ENCODE measurements at regions of chr14 and their contacts with region 1.

Region 1: GRCh38 chr14:70073924-70074566 is 114.7 kb downstream of the SLC8A3 start:
- DNase-seq: peak; percentile 69
- H3K4me3 ChIP-seq: no peak overlapping the region; a peak in 1 of 4 replicates
- H3K27ac ChIP-seq: no peak overlapping the region; a peak in 1 of 4 replicates
- H3K4me1 ChIP-seq: peaks cover 0 to 31% of the 10 kb centered on the region in 2 experiments; a peak in 2 of 4 replicates
- H3K27me3 ChIP-seq: no peaks in the 10 kb centered on the region
- CTCF ChIP-seq: peak; percentile 73
- EP300 ChIP-seq: no peak
- RAD21 ChIP-seq: peak; percentile 82

Region 2: GRCh38 chr14:69667938-69668335 is 406.1 kb before region 1 on chr14:
- CTCF ChIA-PET with region 1: no interaction called
- POLR2A ChIA-PET with region 1: no interaction called
- DNase-seq: no peak
- H3K4me3 ChIP-seq: no peak overlapping the region
- H3K27ac ChIP-seq: no peak overlapping the region
- H3K4me1 ChIP-seq: peaks cover 12 to 18% of the 10 kb centered on the region in 2 experiments
- H3K27me3 ChIP-seq: no peaks in the 10 kb centered on the region
- CTCF ChIP-seq: no peak
- EP300 ChIP-seq: no peak
- RAD21 ChIP-seq: no peak

Region 3: GRCh38 chr14:69842686-69843420 is 231.2 kb before region 1 on chr14:
- CTCF ChIA-PET with region 1: no interaction called
- POLR2A ChIA-PET with region 1: no interaction called
- DNase-seq: no peak
- H3K4me3 ChIP-seq: no peak overlapping the region
- H3K27ac ChIP-seq: no peak overlapping the region
- H3K4me1 ChIP-seq: peaks cover 0 to 11% of the 10 kb centered on the region in 2 experiments; a peak in 1 of 4 replicates
- H3K27me3 ChIP-seq: no peaks in the 10 kb centered on the region
- CTCF ChIP-seq: no peak
- EP300 ChIP-seq: no peak
- RAD21 ChIP-seq: no peak

Region 4: DNA sequence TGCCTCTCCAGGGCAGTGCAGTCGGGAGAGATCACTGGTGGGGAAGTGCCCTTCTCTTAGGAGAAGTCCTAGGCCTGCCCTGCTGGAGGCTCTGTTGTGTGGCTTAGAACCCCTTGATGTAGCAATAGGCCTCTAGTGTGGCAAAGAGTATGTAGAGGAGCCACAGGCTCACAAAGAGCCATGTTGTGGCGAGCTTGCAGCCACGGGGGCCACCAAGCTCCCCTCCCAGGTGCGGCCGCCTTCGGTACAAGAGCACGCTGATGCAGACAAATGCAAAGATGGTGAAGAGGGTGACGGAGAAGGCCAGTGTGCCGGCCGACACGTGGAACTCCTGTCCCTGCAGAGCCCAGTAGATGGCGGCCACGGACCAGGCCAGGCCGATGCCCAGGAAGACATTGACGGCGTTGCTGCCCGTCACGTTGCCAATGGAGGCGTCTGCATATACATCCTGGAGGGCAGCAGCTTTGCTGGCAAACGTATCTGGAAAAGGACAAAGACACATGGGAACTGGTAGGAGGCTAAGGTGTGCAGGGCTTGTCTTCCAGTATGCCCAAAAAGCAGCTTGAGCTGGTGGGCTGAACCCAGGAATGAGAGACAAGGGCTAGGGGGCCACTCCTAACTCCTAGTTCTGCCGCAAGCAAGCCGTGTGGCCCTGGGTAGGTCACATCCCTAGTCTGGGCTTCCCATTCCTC is 28.1 kb before region 1 on chr14:
- CTCF ChIA-PET with region 1: interaction called, 132 read pairs
- POLR2A ChIA-PET with region 1: no interaction called
- DNase-seq: peak; percentile 82
- H3K4me3 ChIP-seq: peak overlapping the region in 1 of 2 experiments; percentile 39; a peak in 1 of 4 replicates
- H3K27ac ChIP-seq: peak overlapping the region in 1 of 2 experiments; percentile 40; a peak in 2 of 4 replicates
- H3K4me1 ChIP-seq: peaks cover 0 to 18% of the 10 kb centered on the region in 2 experiments; a peak in 1 of 4 replicates
- H3K27me3 ChIP-seq: no peaks in the 10 kb centered on the region
- CTCF ChIP-seq: peak; percentile 47
- EP300 ChIP-seq: no peak
- RAD21 ChIP-seq: peak; percentile 96

Region 5: DNA sequence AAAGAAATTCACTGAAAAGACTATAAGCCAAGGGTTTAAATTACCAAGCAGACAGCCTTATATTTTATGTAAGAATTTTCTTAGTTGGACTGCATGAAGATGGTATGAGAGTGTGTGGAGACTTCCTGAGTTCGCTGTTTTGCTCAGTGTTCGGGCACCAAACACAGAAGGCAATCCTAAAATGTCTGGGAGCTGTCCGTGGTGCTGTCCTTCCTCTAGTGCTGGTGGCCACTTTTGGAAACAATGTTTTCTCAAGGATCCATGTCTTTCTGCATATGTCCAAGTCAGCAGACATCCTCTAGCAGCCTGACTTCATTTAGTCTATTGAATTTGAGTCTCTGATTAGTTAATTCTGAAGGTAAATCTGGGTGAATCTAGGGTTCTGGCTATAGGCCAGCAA is 21.1 kb before region 1 on chr14:
- CTCF ChIA-PET with region 1: interaction called, 132 read pairs
- POLR2A ChIA-PET with region 1: no interaction called
- DNase-seq: no peak
- H3K4me3 ChIP-seq: no peak overlapping the region
- H3K27ac ChIP-seq: no peak overlapping the region
- H3K4me1 ChIP-seq: peaks cover 0 to 17% of the 10 kb centered on the region in 2 experiments; a peak in 2 of 4 replicates
- H3K27me3 ChIP-seq: no peaks in the 10 kb centered on the region
- CTCF ChIP-seq: no peak
- EP300 ChIP-seq: no peak
- RAD21 ChIP-seq: no peak

Region 6: GRCh38 chr14:70086685-70087379 is 12.8 kb after region 1 on chr14:
- CTCF ChIA-PET with region 1: interaction called, 62 read pairs
- POLR2A ChIA-PET with region 1: no interaction called
- DNase-seq: peak; percentile 22
- H3K4me3 ChIP-seq: no peak overlapping the region
- H3K27ac ChIP-seq: peak overlapping the region in 1 of 2 experiments; percentile 81; a peak in 2 of 4 replicates
- H3K4me1 ChIP-seq: peaks cover 0 to 16% of the 10 kb centered on the region in 2 experiments; a peak in 2 of 4 replicates
- H3K27me3 ChIP-seq: no peaks in the 10 kb centered on the region
- CTCF ChIP-seq: peak; percentile 60
- EP300 ChIP-seq: peak in 1 of 2 experiments; percentile 53; a peak in 1 of 4 replicates
- RAD21 ChIP-seq: peak; percentile 78

Region 7: DNA sequence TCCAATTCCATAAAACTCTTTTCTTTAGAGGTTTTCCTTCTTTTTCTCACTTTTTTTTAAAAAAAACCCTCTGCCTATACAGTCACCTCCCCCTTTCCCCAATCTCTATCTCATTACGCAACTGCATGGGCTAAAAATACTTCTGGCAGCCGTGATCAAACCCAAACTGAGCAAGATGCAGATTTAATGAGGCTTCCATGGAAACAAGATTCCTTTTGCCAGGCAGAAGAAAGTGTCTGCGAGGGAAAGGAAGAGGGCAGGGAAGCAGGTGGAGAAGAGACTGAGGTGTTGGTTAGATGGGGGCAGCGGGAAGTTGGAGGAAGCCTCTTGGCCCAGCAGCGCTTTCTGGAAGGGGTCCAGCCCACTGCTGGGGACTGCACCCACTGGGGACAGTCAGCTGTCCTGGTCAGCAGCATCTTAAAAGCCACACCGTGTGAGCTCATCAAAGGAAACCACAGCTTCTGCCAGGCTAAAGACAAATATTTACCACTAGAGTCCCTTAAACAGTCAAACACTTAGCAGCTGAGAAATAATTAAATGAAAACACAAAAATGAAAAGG is 24.3 kb after region 1 on chr14:
- CTCF ChIA-PET with region 1: interaction called, 32 read pairs
- POLR2A ChIA-PET with region 1: no interaction called
- DNase-seq: no peak
- H3K4me3 ChIP-seq: no peak overlapping the region
- H3K27ac ChIP-seq: peak overlapping the region in 1 of 2 experiments; percentile 99; a peak in 2 of 4 replicates
- H3K4me1 ChIP-seq: peaks cover 0 to 56% of the 10 kb centered on the region in 2 experiments; a peak in 2 of 4 replicates
- H3K27me3 ChIP-seq: no peaks in the 10 kb centered on the region
- CTCF ChIP-seq: no peak
- EP300 ChIP-seq: no peak
- RAD21 ChIP-seq: no peak

Region 8: GRCh38 chr14:70114621-70115156 is 40.6 kb after region 1 on chr14:
- CTCF ChIA-PET with region 1: no interaction called
- POLR2A ChIA-PET with region 1: no interaction called
- DNase-seq: no peak
- H3K4me3 ChIP-seq: no peak overlapping the region
- H3K27ac ChIP-seq: no peak overlapping the region; a peak in 1 of 4 replicates
- H3K4me1 ChIP-seq: peaks cover 0 to 15% of the 10 kb centered on the region in 2 experiments; a peak in 1 of 4 replicates
- H3K27me3 ChIP-seq: no peaks in the 10 kb centered on the region
- CTCF ChIP-seq: no peak
- EP300 ChIP-seq: no peak
- RAD21 ChIP-seq: no peak

Region 9: GRCh38 chr14:70317969-70318634 is 244.1 kb after region 1 on chr14:
- CTCF ChIA-PET with region 1: interaction called, 15 read pairs
- POLR2A ChIA-PET with region 1: no interaction called
- DNase-seq: peak; percentile 63
- H3K4me3 ChIP-seq: no peak overlapping the region; a peak in 1 of 4 replicates
- H3K27ac ChIP-seq: no peak overlapping the region
- H3K4me1 ChIP-seq: no peaks in the 10 kb centered on the region; a peak in 1 of 4 replicates
- H3K27me3 ChIP-seq: no peaks in the 10 kb centered on the region
- CTCF ChIP-seq: peak; percentile 58
- EP300 ChIP-seq: no peak
- RAD21 ChIP-seq: peak; percentile 95